GM12878 (cell line): ENCODE measurements at regions of chr1 and their contacts with region 1.

Region 1: GRCh38 chr1:41955461-41956159 is 36.9 kb upstream of the HIVEP3 start:
- DNase-seq: peak; percentile 87
- ATAC-seq: peak; percentile 92
- H3K4me3 ChIP-seq: no peak overlapping the region; the same call in 1 of the 2 replicates
- H3K27ac ChIP-seq: peak overlapping the region; percentile 67
- H3K4me1 ChIP-seq: peaks cover 26% of the 10 kb centered on the region
- H3K27me3 ChIP-seq: no peaks in the 10 kb centered on the region
- CTCF ChIP-seq: no peak
- EP300 ChIP-seq: peak; percentile 43 to 81; a peak in 3 of 4 replicates
- POLR2A ChIP-seq: no peak
- RAD21 ChIP-seq: no peak

Region 2: DNA sequence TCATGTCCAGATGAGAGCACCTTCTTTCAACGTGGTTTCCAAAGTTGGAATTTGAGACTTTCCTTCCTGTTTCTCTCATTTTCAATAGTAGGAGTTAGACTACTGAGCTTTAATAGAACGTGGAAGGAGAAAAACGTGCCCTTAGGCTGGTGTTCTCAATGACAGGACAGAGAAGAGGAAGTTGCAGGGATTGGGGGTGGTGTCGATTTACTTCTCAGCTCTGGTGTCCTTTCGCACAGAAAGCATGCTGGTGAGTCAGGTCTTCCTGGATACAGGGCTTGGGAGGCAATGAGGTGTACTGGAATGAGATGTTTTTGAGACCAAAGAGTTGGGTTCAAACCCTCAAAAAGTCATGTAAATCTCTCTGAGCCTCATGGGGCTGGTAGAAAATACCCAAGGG is 104.0 kb before region 1 on chr1:
- CTCF ChIA-PET with region 1: no interaction called
- POLR2A ChIA-PET with region 1: no interaction called
- RAD21 ChIA-PET with region 1: no interaction called
- SMC1A ChIA-PET with region 1: no interaction called
- in situ Hi-C with region 1: no loop called
- intact Hi-C with region 1: no loop called
- DNase-seq: no peak
- ATAC-seq: no peak
- H3K4me3 ChIP-seq: no peak overlapping the region
- H3K27ac ChIP-seq: no peak overlapping the region
- H3K4me1 ChIP-seq: no peaks in the 10 kb centered on the region; the same call in 1 of the 2 replicates
- H3K27me3 ChIP-seq: no peaks in the 10 kb centered on the region
- CTCF ChIP-seq: no peak
- EP300 ChIP-seq: no peak
- POLR2A ChIP-seq: no peak
- RAD21 ChIP-seq: no peak

Region 3: DNA sequence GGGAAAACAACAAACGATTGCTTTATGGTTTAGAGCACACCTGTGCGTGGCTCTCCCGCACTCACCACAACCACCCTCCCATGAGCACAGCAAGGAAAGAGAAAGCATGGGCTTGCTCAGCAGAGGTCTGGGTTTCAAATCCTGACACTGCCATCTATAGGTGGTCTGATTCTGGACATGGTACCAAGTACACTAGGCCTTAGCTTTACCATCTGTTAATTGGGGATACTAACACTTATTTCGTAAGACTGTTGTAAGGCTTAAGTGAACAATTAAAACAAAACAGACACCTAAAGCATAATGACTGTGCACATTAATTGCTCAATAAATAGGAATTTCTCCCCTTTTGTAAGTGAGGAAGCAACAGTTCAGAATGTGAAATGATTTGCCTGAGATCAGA is 87.0 kb before region 1 on chr1:
- CTCF ChIA-PET with region 1: interaction called, 3 read pairs
- POLR2A ChIA-PET with region 1: interaction called, 5 read pairs
- RAD21 ChIA-PET with region 1: interaction called, 4 read pairs
- SMC1A ChIA-PET with region 1: interaction called, 5 read pairs
- in situ Hi-C with region 1: no loop called
- intact Hi-C with region 1: loop called (anchors 1 kb)
- DNase-seq: peak; percentile 63
- ATAC-seq: peak; percentile 96
- H3K4me3 ChIP-seq: no peak overlapping the region
- H3K27ac ChIP-seq: peak overlapping the region; percentile 27; the same call in 1 of the 2 replicates
- H3K4me1 ChIP-seq: peaks cover 19% of the 10 kb centered on the region
- H3K27me3 ChIP-seq: no peaks in the 10 kb centered on the region
- CTCF ChIP-seq: peak; percentile 60 to 71 (median 66); a peak in 5 of 6 replicates
- EP300 ChIP-seq: no peak
- POLR2A ChIP-seq: no peak
- RAD21 ChIP-seq: peak; percentile 60

Region 4: GRCh38 chr1:41919764-41920397 is 35.7 kb before region 1 on chr1:
- CTCF ChIA-PET with region 1: interaction called, 3 read pairs
- POLR2A ChIA-PET with region 1: interaction called, 6 read pairs
- RAD21 ChIA-PET with region 1: interaction called, 6 read pairs
- SMC1A ChIA-PET with region 1: interaction called, 11 read pairs
- in situ Hi-C with region 1: no loop called
- intact Hi-C with region 1: loop called (anchors 2 kb)
- DNase-seq: peak; percentile 55
- ATAC-seq: peak; percentile 98
- H3K4me3 ChIP-seq: peak overlapping the region; percentile 55
- H3K27ac ChIP-seq: peak overlapping the region; percentile 62
- H3K4me1 ChIP-seq: peaks cover 17% of the 10 kb centered on the region
- H3K27me3 ChIP-seq: no peaks in the 10 kb centered on the region; a peak in 1 of 4 replicates
- CTCF ChIP-seq: no peak
- EP300 ChIP-seq: no peak
- POLR2A ChIP-seq: peak; percentile 80
- RAD21 ChIP-seq: no peak

Region 5: GRCh38 chr1:41980827-41981653 is 25.4 kb after region 1 on chr1:
- CTCF ChIA-PET with region 1: interaction called, 4 read pairs
- POLR2A ChIA-PET with region 1: no interaction called
- RAD21 ChIA-PET with region 1: no interaction called
- SMC1A ChIA-PET with region 1: interaction called, 11 read pairs
- in situ Hi-C with region 1: no loop called
- intact Hi-C with region 1: no loop called
- DNase-seq: no peak
- ATAC-seq: no peak
- H3K4me3 ChIP-seq: no peak overlapping the region
- H3K27ac ChIP-seq: no peak overlapping the region
- H3K4me1 ChIP-seq: peaks cover 10% of the 10 kb centered on the region
- H3K27me3 ChIP-seq: no peaks in the 10 kb centered on the region
- CTCF ChIP-seq: no peak
- EP300 ChIP-seq: no peak
- POLR2A ChIP-seq: no peak
- RAD21 ChIP-seq: no peak

Region 6: DNA sequence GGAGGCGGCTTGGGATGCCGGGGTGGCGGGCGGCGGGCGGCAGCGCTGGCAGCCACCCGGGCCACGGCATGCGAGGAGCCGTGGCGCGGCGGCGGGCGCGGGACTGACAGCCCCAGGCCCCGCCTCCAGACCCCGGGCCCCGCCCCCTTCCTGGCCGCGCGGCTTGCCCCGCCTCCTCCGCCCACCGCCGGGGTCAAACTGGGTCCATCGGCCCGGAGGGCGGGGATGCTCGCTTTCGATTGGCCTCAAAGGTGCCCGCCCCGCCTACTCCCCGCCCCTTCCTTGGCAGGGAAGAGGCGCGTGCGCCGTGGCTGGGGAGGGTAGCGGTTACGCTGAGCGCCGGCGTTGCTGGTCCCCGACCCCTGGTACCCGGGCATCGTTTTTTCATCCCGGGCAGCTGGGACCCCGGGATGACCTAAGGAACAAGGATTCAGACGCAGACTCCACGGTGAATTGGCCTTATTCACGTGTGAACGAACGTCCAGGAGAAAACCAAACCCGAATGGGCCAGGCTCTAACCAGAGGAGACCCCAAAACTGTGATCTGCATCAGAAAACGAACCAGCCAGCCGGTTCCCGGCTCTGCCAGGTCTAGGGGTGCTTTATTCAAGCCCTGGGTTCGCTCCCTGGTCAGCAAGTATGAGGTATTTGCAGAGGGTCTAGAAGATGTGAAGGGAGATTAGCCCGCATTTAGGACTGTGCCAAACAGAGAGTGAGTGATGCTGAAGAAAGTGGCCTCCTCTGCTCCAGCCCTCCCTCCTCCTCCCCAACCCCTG is 80.4 kb after region 1 on chr1:
- CTCF ChIA-PET with region 1: interaction called, 13 read pairs
- POLR2A ChIA-PET with region 1: interaction called, 5 read pairs
- RAD21 ChIA-PET with region 1: interaction called, 10 read pairs
- SMC1A ChIA-PET with region 1: interaction called, 19 read pairs
- in situ Hi-C with region 1: no loop called
- intact Hi-C with region 1: loop called (anchors 2 kb)
- DNase-seq: peak; percentile 55
- ATAC-seq: peak; percentile 90
- H3K4me3 ChIP-seq: peak overlapping the region; percentile 93
- H3K27ac ChIP-seq: peak overlapping the region; percentile 37; the same call in 1 of the 2 replicates
- H3K4me1 ChIP-seq: peaks cover 8% of the 10 kb centered on the region; the same call in 1 of the 2 replicates
- H3K27me3 ChIP-seq: no peaks in the 10 kb centered on the region; a peak in 1 of 4 replicates
- CTCF ChIP-seq: no peak
- EP300 ChIP-seq: no peak
- POLR2A ChIP-seq: peak; percentile 63; the same call in 1 of the 2 replicates
- RAD21 ChIP-seq: no peak

Region 7: GRCh38 chr1:42114269-42114668 is 158.7 kb after region 1 on chr1:
- CTCF ChIA-PET with region 1: no interaction called
- POLR2A ChIA-PET with region 1: no interaction called
- RAD21 ChIA-PET with region 1: no interaction called
- SMC1A ChIA-PET with region 1: no interaction called
- in situ Hi-C with region 1: no loop called
- intact Hi-C with region 1: no loop called
- DNase-seq: no peak
- ATAC-seq: no peak
- H3K4me3 ChIP-seq: no peak overlapping the region
- H3K27ac ChIP-seq: no peak overlapping the region
- H3K4me1 ChIP-seq: no peaks in the 10 kb centered on the region
- H3K27me3 ChIP-seq: no peaks in the 10 kb centered on the region
- CTCF ChIP-seq: no peak
- EP300 ChIP-seq: no peak
- POLR2A ChIP-seq: no peak
- RAD21 ChIP-seq: no peak

Region 8: GRCh38 chr1:42154026-42154425 is 198.4 kb after region 1 on chr1:
- CTCF ChIA-PET with region 1: no interaction called
- POLR2A ChIA-PET with region 1: no interaction called
- RAD21 ChIA-PET with region 1: no interaction called
- SMC1A ChIA-PET with region 1: no interaction called
- in situ Hi-C with region 1: no loop called
- intact Hi-C with region 1: no loop called
- DNase-seq: no peak
- ATAC-seq: no peak
- H3K4me3 ChIP-seq: no peak overlapping the region
- H3K27ac ChIP-seq: no peak overlapping the region
- H3K4me1 ChIP-seq: no peaks in the 10 kb centered on the region
- H3K27me3 ChIP-seq: no peaks in the 10 kb centered on the region
- CTCF ChIP-seq: no peak
- EP300 ChIP-seq: no peak
- POLR2A ChIP-seq: no peak
- RAD21 ChIP-seq: no peak